Dendritic cell treated with granulocyte-macrophage colony-stimulating factor and Interleukin-4, amounts not matched to agents 40 ng/mL and 50 ng/mL, for 4 days (primary cell): ENCODE measurements at regions of chr22 and their contacts with region 1.

Region 1: GRCh38 chr22:45226527-45227186 is 14.0 kb downstream of the KIAA0930 start:
- H3K4me3 Mint-ChIP-seq: peak overlapping the region; percentile 30
- H3K27ac Mint-ChIP-seq: peak overlapping the region; percentile 92
- H3K4me1 Mint-ChIP-seq: peaks cover 92% of the 10 kb centered on the region
- H3K27me3 Mint-ChIP-seq: no peaks in the 10 kb centered on the region

Region 2: GRCh38 chr22:45164270-45165088 is 62.2 kb before region 1 on chr22:
- intact Hi-C with region 1: loop called (anchors 5 kb)
- H3K4me3 Mint-ChIP-seq: peak overlapping the region; percentile 91
- H3K27ac Mint-ChIP-seq: peak overlapping the region; percentile 92
- H3K4me1 Mint-ChIP-seq: peaks cover 66% of the 10 kb centered on the region
- H3K27me3 Mint-ChIP-seq: no peaks in the 10 kb centered on the region

Region 3: DNA sequence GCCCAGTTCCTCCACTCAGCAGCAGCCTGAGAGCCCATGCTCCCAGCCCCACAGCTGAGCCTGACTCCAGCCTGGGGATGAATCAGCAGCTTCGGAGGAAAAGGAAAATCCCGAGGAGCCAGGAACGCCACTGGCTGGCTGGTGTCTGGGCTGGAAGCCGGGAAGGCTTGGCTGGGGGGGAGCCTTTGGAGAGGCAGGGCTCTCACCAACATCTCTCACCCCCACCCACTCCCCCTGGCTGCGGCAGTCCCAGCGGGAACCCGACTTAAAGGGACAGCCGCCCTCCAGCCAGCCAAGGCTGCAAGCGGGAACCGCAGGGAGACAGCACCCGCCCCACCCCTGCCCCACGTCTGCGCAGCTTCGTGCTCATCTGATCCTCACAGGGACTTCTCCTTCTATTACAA is 14.3 kb before region 1 on chr22:
- intact Hi-C with region 1: loop called (anchors 2 kb)
- H3K4me3 Mint-ChIP-seq: peak overlapping the region; percentile 53
- H3K27ac Mint-ChIP-seq: peak overlapping the region; percentile 92
- H3K4me1 Mint-ChIP-seq: peaks cover 80% of the 10 kb centered on the region
- H3K27me3 Mint-ChIP-seq: no peaks in the 10 kb centered on the region